A549 (cell line): ENCODE measurements at regions of chr17 and their contacts with region 1.

Region 1: DNA sequence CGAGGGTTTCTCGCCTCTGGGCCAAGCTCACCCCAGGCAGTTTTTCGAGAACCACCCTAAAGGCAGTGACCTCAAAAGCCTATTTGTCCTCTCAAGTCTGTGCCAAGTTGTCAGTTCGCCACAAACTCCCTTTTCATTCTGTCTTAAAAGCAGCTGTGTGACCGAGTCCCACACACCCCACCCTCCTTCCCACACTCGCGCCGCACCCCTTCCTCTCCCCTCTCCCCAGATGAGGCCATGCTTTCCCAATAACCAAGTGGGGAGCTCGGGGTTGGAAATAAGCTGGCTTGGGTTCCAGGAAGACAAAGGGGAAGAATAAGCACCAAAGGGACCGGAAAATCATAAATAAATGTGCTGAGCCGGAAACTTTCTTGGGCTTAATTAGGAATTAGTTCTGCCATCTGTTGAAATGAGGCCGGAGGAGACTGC is 36.7 kb downstream of the GRIN2C start:
- DNase-seq: no peak
- ATAC-seq: no peak
- H3K4me3 ChIP-seq: no peak overlapping the region
- H3K27ac ChIP-seq: no peak overlapping the region
- H3K4me1 ChIP-seq: no peaks in the 10 kb centered on the region
- CTCF ChIP-seq: no peak
- EP300 ChIP-seq: no peak
- POLR2A ChIP-seq: no peak
- RAD21 ChIP-seq: no peak

Region 2: DNA sequence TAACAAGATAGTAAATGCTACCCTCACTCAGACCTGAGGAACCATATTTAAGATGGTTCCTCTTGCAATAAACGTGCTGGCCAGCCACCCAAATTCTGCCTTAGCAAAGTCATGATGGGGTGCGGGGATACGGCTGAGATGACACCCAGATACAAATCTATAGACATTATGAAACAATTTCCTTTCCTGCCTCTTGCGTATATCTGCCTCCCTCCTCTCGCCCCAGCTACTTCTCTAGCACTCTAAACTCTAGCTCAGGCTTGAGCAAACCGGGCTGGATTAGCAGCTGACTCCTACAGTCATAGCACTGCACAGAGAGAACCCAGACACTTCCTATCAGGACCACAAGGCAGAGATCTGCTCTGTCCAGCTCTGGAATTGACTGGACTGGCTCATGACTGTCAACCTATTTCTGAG is 132.5 kb before region 1 on chr17:
- CTCF ChIA-PET with region 1: no interaction called
- POLR2A ChIA-PET with region 1: no interaction called
- DNase-seq: no peak
- ATAC-seq: peak; percentile 24 to 59; a peak in 1 of 6 replicates
- H3K4me3 ChIP-seq: no peak overlapping the region
- H3K27ac ChIP-seq: no peak overlapping the region
- H3K4me1 ChIP-seq: no peaks in the 10 kb centered on the region
- CTCF ChIP-seq: no peak
- EP300 ChIP-seq: no peak
- POLR2A ChIP-seq: no peak
- RAD21 ChIP-seq: no peak

Region 3: DNA sequence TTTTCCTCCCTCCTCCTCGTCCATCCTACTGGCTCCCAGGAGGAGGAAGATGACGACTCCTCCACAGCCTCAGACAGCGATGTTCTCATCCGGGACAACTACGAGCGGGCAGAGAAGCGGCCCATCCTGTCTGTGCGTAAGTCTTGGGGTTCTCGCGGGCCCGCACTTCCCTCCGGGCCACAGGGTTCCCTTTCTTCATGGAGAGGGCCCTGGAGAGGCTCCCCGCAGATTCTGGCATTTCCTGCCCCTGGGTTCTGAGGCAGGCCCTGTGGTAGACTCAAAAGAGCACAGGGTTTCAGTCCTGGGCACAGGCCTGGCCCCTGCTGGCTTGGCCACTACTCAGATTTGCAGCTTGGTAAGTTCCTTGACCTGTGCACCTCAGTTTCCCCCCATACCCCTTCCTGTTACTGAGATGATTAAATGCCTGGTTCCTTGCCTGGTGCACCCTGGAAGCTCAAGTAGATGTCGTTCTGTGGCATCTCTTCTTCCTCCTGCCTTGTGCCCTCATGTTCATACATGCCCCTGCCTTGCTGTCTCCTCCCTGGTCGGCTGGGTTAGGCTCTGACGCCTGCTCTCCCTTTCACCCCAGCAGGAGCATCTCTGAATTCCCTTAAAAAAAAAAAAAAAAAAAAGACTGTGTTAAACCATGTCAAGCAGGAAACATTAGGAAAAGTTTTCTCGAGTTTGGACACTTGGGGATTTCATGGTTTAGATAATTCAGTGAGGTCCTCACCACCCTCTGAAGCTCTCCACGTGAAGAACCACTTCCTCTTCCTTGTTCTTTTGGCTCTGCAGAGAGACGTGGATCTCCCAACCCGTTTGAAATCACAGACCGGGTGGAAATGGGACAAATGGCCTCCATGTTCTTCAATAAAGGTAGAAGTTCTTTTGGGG is 32.5 kb before region 1 on chr17:
- CTCF ChIA-PET with region 1: interaction called, 131 read pairs
- POLR2A ChIA-PET with region 1: no interaction called
- DNase-seq: no peak
- ATAC-seq: no peak
- H3K4me3 ChIP-seq: no peak overlapping the region
- H3K27ac ChIP-seq: no peak overlapping the region
- H3K4me1 ChIP-seq: no peaks in the 10 kb centered on the region
- CTCF ChIP-seq: no peak
- EP300 ChIP-seq: no peak
- POLR2A ChIP-seq: no peak
- RAD21 ChIP-seq: no peak

Region 4: GRCh38 chr17:74807925-74808324 is 15.0 kb before region 1 on chr17:
- CTCF ChIA-PET with region 1: interaction called, 13 read pairs
- POLR2A ChIA-PET with region 1: no interaction called
- DNase-seq: no peak
- ATAC-seq: no peak
- H3K4me3 ChIP-seq: no peak overlapping the region
- H3K27ac ChIP-seq: no peak overlapping the region
- H3K4me1 ChIP-seq: no peaks in the 10 kb centered on the region
- CTCF ChIP-seq: no peak
- EP300 ChIP-seq: no peak
- POLR2A ChIP-seq: no peak
- RAD21 ChIP-seq: no peak

Region 5: DNA sequence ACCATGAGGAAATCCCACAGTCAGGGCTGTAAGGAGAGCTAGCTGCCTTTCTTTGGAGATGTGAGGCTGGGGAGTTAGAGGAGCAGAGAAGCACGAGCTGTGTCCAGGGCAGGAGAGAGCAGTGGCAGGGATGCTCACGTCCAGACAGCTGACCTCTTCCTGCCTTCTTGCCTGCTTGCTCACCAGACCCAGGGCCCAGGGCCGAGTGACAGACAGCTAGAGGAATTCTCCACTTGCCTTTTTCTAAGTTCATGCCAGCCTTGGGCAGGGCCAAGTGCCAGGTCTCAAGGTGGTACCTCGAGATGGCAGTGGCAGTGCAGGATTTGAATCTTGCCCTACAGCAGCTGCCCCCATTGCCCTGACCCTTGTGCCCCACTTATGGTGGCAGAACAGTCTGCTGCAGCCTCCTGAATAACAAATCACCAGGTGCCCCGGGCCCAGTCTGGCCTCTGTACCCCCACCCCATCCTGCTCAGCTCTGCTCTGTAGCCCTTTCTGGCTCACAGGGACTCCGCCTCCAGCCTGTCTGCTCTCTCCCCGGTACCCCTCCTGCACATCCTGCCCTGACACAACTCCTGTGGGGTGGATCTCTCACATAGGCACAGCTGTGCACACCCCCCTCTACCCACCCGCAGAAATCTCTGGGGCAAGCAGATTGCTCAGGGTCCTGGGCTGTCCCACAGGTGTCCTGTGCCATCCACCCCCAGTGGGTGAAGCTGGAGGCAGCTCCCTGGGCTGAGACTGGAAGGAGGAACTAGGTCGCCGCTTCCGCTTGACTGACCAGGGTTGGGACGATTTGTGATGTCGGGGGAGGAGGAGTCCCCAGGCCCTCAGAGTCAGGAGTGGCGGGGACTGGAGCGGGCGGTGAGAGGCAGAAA is 10.8 kb after region 1 on chr17:
- CTCF ChIA-PET with region 1: interaction called, 16 read pairs
- POLR2A ChIA-PET with region 1: no interaction called
- DNase-seq: no peak
- ATAC-seq: peak; percentile 45 to 62; a peak in 4 of 6 replicates
- H3K4me3 ChIP-seq: no peak overlapping the region
- H3K27ac ChIP-seq: no peak overlapping the region
- H3K4me1 ChIP-seq: no peaks in the 10 kb centered on the region; the same call in 2 of the 3 replicates
- CTCF ChIP-seq: no peak
- EP300 ChIP-seq: no peak
- POLR2A ChIP-seq: no peak
- RAD21 ChIP-seq: no peak

Region 6: GRCh38 chr17:74842599-74843351 is 19.8 kb after region 1 on chr17:
- CTCF ChIA-PET with region 1: interaction called, 25 read pairs
- POLR2A ChIA-PET with region 1: no interaction called
- DNase-seq: peak; percentile 82 to 96
- ATAC-seq: peak; percentile 79 to 89
- H3K4me3 ChIP-seq: peak overlapping the region; percentile 50
- H3K27ac ChIP-seq: peak overlapping the region; percentile 82 to 89
- H3K4me1 ChIP-seq: peaks cover 4% of the 10 kb centered on the region; the same call in 1 of the 3 replicates
- CTCF ChIP-seq: peak; percentile 63
- EP300 ChIP-seq: no peak
- POLR2A ChIP-seq: peak; percentile 77
- RAD21 ChIP-seq: peak; percentile 41 to 61; a peak in 4 of 5 replicates

Region 7: DNA sequence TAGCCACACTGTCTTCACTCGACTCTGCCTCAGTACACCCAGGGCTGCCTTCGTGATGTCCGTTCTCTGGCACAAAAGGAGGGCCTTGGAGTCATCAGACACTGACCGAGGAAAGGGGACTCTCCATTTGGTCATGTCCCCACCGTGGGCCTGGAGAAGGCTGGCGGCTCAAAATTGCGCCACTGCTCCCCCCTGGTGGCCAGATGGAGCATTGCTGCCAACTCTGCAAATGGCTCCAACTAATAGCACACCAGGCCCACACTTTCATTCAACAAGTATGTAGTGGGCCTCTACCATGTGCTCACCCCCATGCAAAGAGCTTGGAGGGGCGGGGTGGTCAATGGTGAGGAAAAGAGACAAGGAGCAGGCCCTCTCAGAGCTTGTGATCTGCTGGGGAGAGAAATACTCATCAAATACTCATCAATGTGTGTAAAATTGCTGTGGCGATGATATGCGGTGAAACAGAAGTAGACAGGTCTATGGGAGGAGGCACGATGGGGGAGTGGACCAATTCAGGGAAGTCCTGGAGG is 42.0 kb after region 1 on chr17:
- CTCF ChIA-PET with region 1: interaction called, 26 read pairs
- POLR2A ChIA-PET with region 1: no interaction called
- DNase-seq: peak; percentile 78 to 85
- ATAC-seq: peak; percentile 49 to 74
- H3K4me3 ChIP-seq: no peak overlapping the region
- H3K27ac ChIP-seq: no peak overlapping the region
- H3K4me1 ChIP-seq: peaks cover 38% of the 10 kb centered on the region
- CTCF ChIP-seq: peak; percentile 77
- EP300 ChIP-seq: no peak
- POLR2A ChIP-seq: no peak
- RAD21 ChIP-seq: peak; percentile 76 to 85